ENCODE measurements at regions of chr17 and their contacts with region 1.

Region 1: DNA sequence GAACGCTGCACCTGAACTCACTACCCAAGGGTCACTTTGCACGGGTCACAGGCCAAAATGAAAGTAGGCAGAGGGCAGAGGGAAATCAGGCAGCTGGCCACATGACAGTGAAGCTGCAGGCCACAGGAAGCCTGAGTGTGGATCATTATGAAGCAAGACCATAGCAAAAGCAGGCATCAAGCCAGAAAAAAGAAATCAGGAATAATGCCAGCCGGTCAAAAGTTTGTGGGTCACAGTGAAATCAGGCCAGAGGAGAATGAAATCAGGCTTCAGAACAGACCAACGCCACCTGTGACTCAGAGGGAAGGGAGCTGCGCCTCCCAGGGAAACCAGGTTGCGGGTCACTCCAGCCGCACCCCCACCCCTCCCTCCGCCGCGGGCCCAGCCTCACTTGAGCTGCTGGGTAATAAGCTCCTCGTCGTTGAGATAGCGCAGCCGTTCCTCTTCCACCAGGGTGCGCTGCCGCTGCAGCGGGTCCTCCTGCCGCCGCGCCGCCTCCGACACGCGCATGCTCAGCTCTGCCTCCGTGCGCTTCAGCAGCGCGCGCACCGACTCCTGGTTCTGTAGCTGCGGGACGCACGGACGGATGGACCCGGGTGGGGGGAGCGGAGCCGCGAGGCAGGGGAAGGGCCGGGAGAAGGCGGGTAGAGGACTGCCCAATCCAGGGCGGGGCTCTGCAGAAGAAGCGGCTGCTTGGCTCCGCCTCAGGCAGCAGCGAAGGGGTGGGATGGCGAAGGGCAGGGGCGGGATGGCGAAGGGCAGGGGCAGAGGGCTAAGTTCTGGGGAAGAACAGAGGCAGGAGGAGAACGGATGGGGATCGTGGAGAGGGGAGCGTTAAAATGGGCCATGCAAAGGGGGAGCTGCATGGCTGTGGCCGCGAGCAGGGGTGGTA is 47.7 kb downstream of the SRCIN1 start:
- DNase-seq: peak; percentile 75 to 89 (median 85)
- ATAC-seq: peak; percentile 87
- H3K4me3 ChIP-seq: peak overlapping the region; percentile 81
- H3K4me3 Mint-ChIP-seq: peak overlapping the region; percentile 87 to 100 (median 96)
- H3K27ac ChIP-seq: no peak overlapping the region
- H3K27ac Mint-ChIP-seq: peak overlapping the region in 8 of 9 donors; percentile 34 to 87 (median 70)
- H3K4me1 ChIP-seq: peaks cover 0 to 23% of the 10 kb centered on the region in 2 donors
- H3K4me1 Mint-ChIP-seq: peaks cover 16 to 31% (median 25%) of the 10 kb centered on the region in 7 donors
- H3K27me3 ChIP-seq: peaks cover 10 to 20% of the 10 kb centered on the region in 2 donors
- H3K27me3 Mint-ChIP-seq: peaks cover 12 to 66% (median 18%) of the 10 kb centered on the region in 5 donors

Region 2: GRCh38 chr17:38584350-38584925 is 26.4 kb after region 1 on chr17:
- CTCF ChIA-PET with region 1: interaction called, 62 read pairs
- POLR2A ChIA-PET with region 1: interaction called, 5 read pairs
- intact Hi-C with region 1: loop called (anchors 1 kb)
- DNase-seq: peak; percentile 37 to 76 (median 56)
- ATAC-seq: peak; percentile 89
- H3K4me3 ChIP-seq: no peak overlapping the region
- H3K4me3 Mint-ChIP-seq: peak overlapping the region in 5 of 10 donors; percentile 2 to 34 (median 26)
- H3K27ac ChIP-seq: no peak overlapping the region
- H3K27ac Mint-ChIP-seq: peak overlapping the region in 1 of 9 donors; percentile 16
- H3K4me1 ChIP-seq: peaks cover 0 to 7% of the 10 kb centered on the region in 2 donors
- H3K4me1 Mint-ChIP-seq: peaks cover 0 to 14% (median 6%) of the 10 kb centered on the region in 7 donors
- H3K27me3 ChIP-seq: peaks cover 0 to 6% of the 10 kb centered on the region in 2 donors
- H3K27me3 Mint-ChIP-seq: peaks cover 60 to 87% (median 69%) of the 10 kb centered on the region in 5 donors

Region 3: GRCh38 chr17:38667099-38667786 is 109.2 kb after region 1 on chr17:
- CTCF ChIA-PET with region 1: interaction called, 55 read pairs
- POLR2A ChIA-PET with region 1: no interaction called
- intact Hi-C with region 1: loop called (anchors 1 kb)
- DNase-seq: peak in 7 of 9 donors; percentile 16 to 66 (median 44)
- ATAC-seq: peak; percentile 80
- H3K4me3 ChIP-seq: no peak overlapping the region
- H3K4me3 Mint-ChIP-seq: no peak overlapping the region
- H3K27ac ChIP-seq: no peak overlapping the region
- H3K27ac Mint-ChIP-seq: no peak overlapping the region
- H3K4me1 ChIP-seq: no peaks in the 10 kb centered on the region
- H3K4me1 Mint-ChIP-seq: peaks cover 0 to 13% (median 8%) of the 10 kb centered on the region in 7 donors
- H3K27me3 ChIP-seq: peaks cover 0 to 6% of the 10 kb centered on the region in 2 donors
- H3K27me3 Mint-ChIP-seq: peaks cover 44 to 66% (median 56%) of the 10 kb centered on the region in 5 donors

Region 4: DNA sequence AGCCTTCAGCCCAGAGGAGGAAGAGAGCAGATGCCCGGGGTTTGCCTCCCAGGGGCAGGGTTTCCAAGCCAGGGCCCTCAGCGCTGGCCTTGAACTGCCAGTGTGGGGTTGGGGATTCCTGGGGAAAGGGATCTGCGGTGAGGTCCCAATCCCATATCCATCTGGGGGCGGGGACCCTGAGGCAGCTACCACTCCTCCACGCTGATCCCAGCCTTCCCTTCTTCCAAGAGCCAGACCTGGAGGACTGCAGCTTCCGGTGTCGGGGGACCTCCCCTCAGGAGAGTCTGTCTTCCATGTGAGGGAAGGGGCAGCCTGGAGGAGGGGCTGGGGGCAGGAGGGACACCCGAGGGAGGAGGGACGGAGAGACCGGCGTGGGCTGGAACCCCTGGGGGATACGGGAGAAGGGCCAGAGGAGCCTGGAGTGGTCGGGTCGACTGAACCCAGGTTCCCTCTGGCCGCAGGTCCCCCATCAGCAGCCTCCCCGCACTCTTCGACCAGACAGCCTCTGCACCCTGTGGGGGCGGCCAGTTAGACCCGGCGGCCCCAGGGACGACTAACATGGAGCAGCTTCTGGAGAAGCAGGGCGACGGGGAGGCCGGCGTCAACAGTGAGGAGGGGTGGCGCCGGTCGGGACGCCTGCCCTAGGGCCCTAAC is 161.3 kb after region 1 on chr17:
- CTCF ChIA-PET with region 1: no interaction called
- POLR2A ChIA-PET with region 1: no interaction called
- intact Hi-C with region 1: no loop called
- DNase-seq: no peak
- ATAC-seq: no peak
- H3K4me3 ChIP-seq: no peak overlapping the region
- H3K4me3 Mint-ChIP-seq: no peak overlapping the region
- H3K27ac ChIP-seq: peak overlapping the region; percentile 14
- H3K27ac Mint-ChIP-seq: peak overlapping the region in 6 of 9 donors; percentile 53 to 83 (median 72)
- H3K4me1 ChIP-seq: peaks cover 0 to 3% of the 10 kb centered on the region in 2 donors
- H3K4me1 Mint-ChIP-seq: peaks cover 24 to 61% (median 38%) of the 10 kb centered on the region in 7 donors
- H3K27me3 ChIP-seq: no peaks in the 10 kb centered on the region
- H3K27me3 Mint-ChIP-seq: no peaks in the 10 kb centered on the region

Region 5: GRCh38 chr17:38729886-38730525 is 171.9 kb after region 1 on chr17 and contains the start of gene CISD3:
- CTCF ChIA-PET with region 1: interaction called, 6 read pairs
- POLR2A ChIA-PET with region 1: interaction called, 4 read pairs
- intact Hi-C with region 1: loop called (anchors 1 to 2 kb)
- DNase-seq: peak; percentile 73 to 91 (median 84)
- ATAC-seq: peak; percentile 92
- H3K4me3 ChIP-seq: peak within 1 kb of the TSS; percentile 78
- H3K4me3 Mint-ChIP-seq: peak within 1 kb of the TSS; percentile 87 to 99 (median 95)
- H3K27ac ChIP-seq: peak within 1 kb of the TSS; percentile 81
- H3K27ac Mint-ChIP-seq: peak within 1 kb of the TSS; percentile 89 to 97 (median 93)
- H3K4me1 ChIP-seq: peaks cover 44 to 56% of the 10 kb centered on the region in 2 donors
- H3K4me1 Mint-ChIP-seq: peaks cover 40 to 91% (median 79%) of the 10 kb centered on the region in 7 donors
- H3K27me3 ChIP-seq: no peaks in the 10 kb centered on the region
- H3K27me3 Mint-ChIP-seq: peaks cover 0 to 2% (median 0%) of the 10 kb centered on the region in 5 donors
- total RNA-seq, gene CISD3: 8.0 to 39.6 (median 12.9) TPM

Region 6: GRCh38 chr17:38789185-38789584 is 231.1 kb after region 1 on chr17:
- CTCF ChIA-PET with region 1: no interaction called
- POLR2A ChIA-PET with region 1: no interaction called
- intact Hi-C with region 1: no loop called
- DNase-seq: no peak
- ATAC-seq: no peak
- H3K4me3 ChIP-seq: no peak overlapping the region
- H3K4me3 Mint-ChIP-seq: no peak overlapping the region
- H3K27ac ChIP-seq: no peak overlapping the region
- H3K27ac Mint-ChIP-seq: peak overlapping the region in 2 of 9 donors; percentile 42 to 48
- H3K4me1 ChIP-seq: no peaks in the 10 kb centered on the region
- H3K4me1 Mint-ChIP-seq: peaks cover 6 to 32% (median 23%) of the 10 kb centered on the region in 7 donors
- H3K27me3 ChIP-seq: no peaks in the 10 kb centered on the region
- H3K27me3 Mint-ChIP-seq: no peaks in the 10 kb centered on the region

Region 7: DNA sequence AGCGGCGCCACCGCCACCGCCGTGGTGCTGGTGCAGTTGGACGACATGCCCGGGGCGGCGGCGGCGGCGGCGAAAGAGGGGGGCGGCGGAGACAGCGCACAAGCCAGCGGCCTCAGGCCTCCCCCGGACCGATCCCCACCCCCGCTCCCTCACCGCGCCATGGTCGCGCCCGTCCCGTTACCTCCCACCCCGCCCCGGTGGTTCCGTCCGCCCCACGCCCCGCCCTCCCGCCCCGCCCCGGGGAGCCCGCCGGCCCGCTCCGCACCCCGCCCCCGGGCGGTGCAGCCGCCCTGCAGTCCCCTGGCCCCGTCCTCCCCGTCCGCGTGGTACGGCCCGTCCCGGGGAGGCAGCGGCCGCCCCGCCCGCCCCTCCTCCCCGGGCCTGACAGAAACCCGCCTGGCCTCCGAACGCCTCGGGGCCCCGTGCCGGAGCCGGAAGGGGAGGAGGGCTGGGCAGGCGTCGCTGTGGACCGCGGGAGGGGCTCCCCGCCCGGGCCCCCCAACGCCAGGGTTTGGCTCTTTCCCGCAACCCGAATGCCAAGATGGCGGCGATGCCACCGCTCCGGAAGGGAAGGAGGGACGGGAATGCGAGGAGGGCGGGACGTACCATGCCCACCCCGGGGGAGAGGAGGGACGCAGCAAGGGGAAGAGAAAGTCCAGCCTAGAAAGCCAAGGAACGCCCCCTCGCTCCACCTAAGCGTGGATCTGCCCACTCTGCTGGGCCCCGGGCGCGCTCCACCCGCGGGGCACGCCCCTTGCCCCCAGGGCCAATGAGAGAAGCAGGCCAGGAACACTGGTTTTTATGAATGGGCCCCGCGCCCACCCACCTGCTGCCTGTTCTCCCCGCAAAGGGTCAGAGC is 241.5 kb after region 1 on chr17 and contains the start of gene PIP4K2B:
- CTCF ChIA-PET with region 1: no interaction called
- POLR2A ChIA-PET with region 1: no interaction called
- intact Hi-C with region 1: loop called in 1 of 2 experiments (anchors 2 kb)
- DNase-seq: peak; percentile 70 to 88 (median 78)
- ATAC-seq: peak; percentile 87
- H3K4me3 ChIP-seq: peak within 1 kb of the TSS; percentile 93
- H3K4me3 Mint-ChIP-seq: peak within 1 kb of the TSS; percentile 92 to 100 (median 96)
- H3K27ac ChIP-seq: peak within 1 kb of the TSS; percentile 81
- H3K27ac Mint-ChIP-seq: peak within 1 kb of the TSS; percentile 88 to 96 (median 92)
- H3K4me1 ChIP-seq: peaks cover 15 to 21% of the 10 kb centered on the region in 2 donors
- H3K4me1 Mint-ChIP-seq: peaks cover 31 to 48% (median 42%) of the 10 kb centered on the region in 7 donors
- H3K27me3 ChIP-seq: no peaks in the 10 kb centered on the region
- H3K27me3 Mint-ChIP-seq: no peaks in the 10 kb centered on the region
- total RNA-seq, gene PIP4K2B: 32.4 to 67.9 (median 49.1) TPM

Measured in naive thymus-derived CD4-positive, alpha-beta T cell (primary cell).